ENCODE measurements at regions of chr2 and their contacts with region 1.

Region 1: DNA sequence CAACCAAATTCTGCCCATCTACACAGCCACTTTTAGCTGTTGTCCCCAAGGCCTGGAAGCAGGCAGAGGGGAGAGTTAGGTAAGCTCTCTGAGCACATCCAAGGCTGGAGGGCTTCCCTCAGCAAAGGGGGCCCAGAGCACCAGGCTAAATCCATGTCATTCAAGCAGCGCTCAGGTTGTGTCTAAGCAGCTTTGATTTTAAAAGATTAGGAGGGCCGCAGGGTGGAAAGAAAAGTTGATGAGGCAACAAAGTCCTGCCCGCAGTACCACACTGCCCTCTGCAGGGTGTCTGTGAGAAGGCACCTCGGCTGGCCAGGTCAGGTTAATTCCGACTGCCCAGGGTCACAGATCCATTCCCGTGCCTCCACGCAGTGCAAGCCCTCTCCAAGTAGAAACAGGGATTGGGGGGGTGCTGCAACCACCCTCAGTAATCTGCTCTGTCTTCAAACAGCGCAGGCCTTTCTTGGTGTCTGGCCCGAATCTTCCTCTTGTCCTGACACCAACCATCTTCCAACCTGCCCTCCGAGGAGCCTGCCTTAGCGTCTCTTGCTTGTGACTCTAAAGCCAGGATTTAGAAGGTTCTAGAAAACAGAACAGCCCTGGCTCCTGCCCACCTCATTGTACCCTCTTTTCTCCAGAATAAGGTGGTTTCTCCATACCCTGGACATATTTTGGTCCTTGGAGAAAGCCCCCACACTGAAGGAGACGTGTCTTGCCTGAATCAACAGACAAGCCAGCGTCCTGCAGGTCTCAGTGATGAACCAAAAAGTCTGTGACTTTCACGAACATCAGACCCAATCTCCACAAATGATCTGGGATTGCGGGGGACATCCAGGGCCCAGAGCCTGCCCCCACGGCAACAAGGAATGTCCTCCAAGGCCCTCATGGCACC is 289.2 kb downstream of the TNS1 start:
- DNase-seq: peak; percentile 86
- ATAC-seq: peak; percentile 78
- H3K4me3 Mint-ChIP-seq: no peak overlapping the region
- H3K27ac Mint-ChIP-seq: no peak overlapping the region
- H3K4me1 Mint-ChIP-seq: no peaks in the 10 kb centered on the region
- H3K27me3 Mint-ChIP-seq: peaks cover 2% of the 10 kb centered on the region

Region 2: DNA sequence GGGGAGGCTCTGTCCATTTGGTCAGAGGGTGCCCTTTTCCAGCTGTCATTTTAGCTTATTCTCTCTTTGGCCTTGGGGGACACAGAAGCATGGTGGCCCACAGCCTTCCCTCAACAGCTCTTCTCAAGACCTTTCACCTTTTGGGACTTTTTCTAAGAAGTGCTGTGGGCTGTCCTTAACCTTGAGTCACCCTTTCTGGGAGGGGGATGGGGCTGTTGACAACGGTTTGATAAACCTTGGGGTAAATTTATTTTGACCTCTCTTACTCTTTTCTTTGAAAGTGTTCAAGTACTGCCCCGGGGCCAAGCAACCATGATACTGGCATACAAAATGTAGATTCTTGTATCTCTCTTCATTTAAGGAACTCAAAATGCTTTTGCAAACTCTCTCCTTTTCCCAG is 1032.0 kb before region 1 on chr2:
- CTCF ChIA-PET with region 1: interaction called, 4 read pairs
- POLR2A ChIA-PET with region 1: no interaction called
- intact Hi-C with region 1: loop called (anchors 1 kb)
- DNase-seq: no peak
- ATAC-seq: no peak
- H3K4me3 Mint-ChIP-seq: no peak overlapping the region
- H3K27ac Mint-ChIP-seq: no peak overlapping the region
- H3K4me1 Mint-ChIP-seq: peaks cover 8% of the 10 kb centered on the region
- H3K27me3 Mint-ChIP-seq: peaks cover 13% of the 10 kb centered on the region

Region 3: DNA sequence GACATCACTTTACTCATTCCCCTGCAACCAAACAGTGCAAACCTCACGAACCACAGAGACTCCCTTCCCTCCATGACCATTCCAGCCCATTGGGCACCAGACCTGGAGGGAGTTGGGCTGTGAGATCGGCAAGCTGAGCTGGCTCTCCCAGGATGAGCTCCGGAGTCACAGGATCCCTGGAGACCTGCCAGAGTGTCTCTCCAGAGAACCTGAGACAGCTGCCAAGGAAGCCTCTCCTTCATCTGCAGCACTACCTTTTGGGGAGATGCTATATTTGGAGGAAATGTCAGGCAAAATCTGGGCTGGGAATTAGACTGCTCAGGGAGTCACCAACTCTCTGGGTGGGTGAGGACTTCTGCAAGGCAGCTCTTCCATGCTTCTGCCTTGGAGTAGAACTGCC is 128.3 kb before region 1 on chr2:
- CTCF ChIA-PET with region 1: no interaction called
- POLR2A ChIA-PET with region 1: no interaction called
- intact Hi-C with region 1: no loop called
- DNase-seq: no peak
- ATAC-seq: no peak
- H3K4me3 Mint-ChIP-seq: no peak overlapping the region
- H3K27ac Mint-ChIP-seq: no peak overlapping the region
- H3K4me1 Mint-ChIP-seq: peaks cover 4% of the 10 kb centered on the region
- H3K27me3 Mint-ChIP-seq: peaks cover 5% of the 10 kb centered on the region